ENCODE measurements at regions of chr10 and their contacts with region 1.

Region 1: DNA sequence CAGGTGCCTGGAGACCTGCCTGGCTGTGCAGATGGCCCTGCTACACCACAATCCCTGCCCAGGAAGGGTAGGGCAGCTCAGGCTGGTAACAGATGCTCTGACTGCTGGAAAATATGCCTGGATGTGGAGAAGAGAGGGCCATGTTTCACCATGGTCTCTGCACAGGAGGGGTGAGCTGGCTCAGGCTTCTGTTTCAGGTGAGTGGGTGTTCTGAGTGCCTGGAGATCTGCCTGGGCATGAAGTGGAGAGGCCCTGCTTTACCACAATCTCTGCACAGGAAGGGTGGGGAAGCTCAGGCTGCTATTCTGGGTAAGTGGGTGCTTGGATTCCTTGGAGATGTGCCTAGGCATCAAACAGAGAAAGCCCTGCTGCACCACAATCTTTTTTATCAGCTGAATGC is 350.1 kb downstream of the KIF20B start:
- DNase-seq: peak; percentile 98
- H3K4me3 ChIP-seq: peak overlapping the region; percentile 48 to 62 (median 53)
- H3K27ac ChIP-seq: peak overlapping the region; percentile 92
- H3K4me1 ChIP-seq: peaks cover 34% of the 10 kb centered on the region
- H3K27me3 ChIP-seq: no peaks in the 10 kb centered on the region
- CTCF ChIP-seq: no peak

Region 2: GRCh38 chr10:90087197-90088007 is 35.9 kb after region 1 on chr10:
- CTCF ChIA-PET with region 1: no interaction called
- dilution Hi-C with region 1: no loop called
- in situ Hi-C with region 1: no loop called
- intact Hi-C with region 1: loop called (anchors 2 kb)
- DNase-seq: peak; percentile 87
- H3K4me3 ChIP-seq: no peak overlapping the region
- H3K27ac ChIP-seq: peak overlapping the region; percentile 89
- H3K4me1 ChIP-seq: peaks cover 11% of the 10 kb centered on the region
- H3K27me3 ChIP-seq: no peaks in the 10 kb centered on the region
- CTCF ChIP-seq: no peak

Region 3: DNA sequence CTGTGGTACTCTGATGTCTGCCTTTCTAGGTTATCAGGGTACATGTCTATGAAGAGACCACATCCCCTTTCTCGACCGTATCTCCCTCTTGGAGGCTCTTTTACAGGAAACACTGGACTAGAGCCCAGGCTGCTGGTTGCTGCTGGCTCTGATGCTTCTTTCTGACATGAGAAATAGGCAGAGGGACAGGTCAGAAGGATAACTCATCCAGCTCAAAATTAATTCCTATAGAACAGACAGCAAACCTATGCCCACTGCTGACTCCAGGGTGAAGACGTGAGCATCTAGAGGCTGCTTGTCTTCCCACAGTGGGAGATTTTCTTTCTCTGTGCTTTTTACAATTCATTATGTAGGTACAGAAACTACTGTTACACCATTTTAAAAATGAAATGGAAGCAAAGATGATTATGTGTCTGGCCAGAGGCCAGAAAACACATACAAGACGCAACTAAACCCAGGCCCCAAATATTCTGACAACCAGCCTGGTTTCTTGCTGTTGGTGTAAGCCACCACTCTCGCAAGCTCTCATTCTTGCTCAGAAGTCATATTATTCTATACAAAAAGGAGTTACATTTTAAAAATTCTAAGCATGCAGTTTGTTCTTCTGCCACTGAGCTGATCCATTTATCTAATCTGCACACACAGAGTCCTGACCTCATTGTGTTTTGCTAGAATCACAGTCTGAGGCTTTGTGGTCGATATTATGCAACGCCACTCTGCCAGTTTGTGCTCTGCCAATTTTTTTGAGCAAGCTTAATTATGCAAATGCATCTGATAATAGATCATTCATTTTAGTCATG is 74.2 kb after region 1 on chr10:
- CTCF ChIA-PET with region 1: no interaction called
- dilution Hi-C with region 1: no loop called
- in situ Hi-C with region 1: no loop called
- intact Hi-C with region 1: loop called (anchors 5 kb)
- DNase-seq: peak; percentile 77
- H3K4me3 ChIP-seq: no peak overlapping the region
- H3K27ac ChIP-seq: no peak overlapping the region
- H3K4me1 ChIP-seq: peaks cover 15% of the 10 kb centered on the region
- H3K27me3 ChIP-seq: no peaks in the 10 kb centered on the region
- CTCF ChIP-seq: peak; percentile 20 to 29

Measured in mammary epithelial cell (primary cell).